CD4-positive, alpha-beta T cell (primary cell): ENCODE measurements at regions of chr18 and their contacts with region 1.

Region 1: GRCh38 chr18:51051105-51051712 is 21.2 kb downstream of the SMAD4 start:
- DNase-seq: peak in 4 of 14 experiments; percentile 15 to 79 (median 72)
- ATAC-seq: peak; percentile 83
- H3K4me3 ChIP-seq: no peak overlapping the region
- H3K4me3 Mint-ChIP-seq: no peak overlapping the region
- H3K27ac ChIP-seq: no peak overlapping the region
- H3K27ac Mint-ChIP-seq: peak overlapping the region; percentile 37
- H3K4me1 ChIP-seq: no peaks in the 10 kb centered on the region
- H3K4me1 Mint-ChIP-seq: peaks cover 46% of the 10 kb centered on the region
- H3K27me3 ChIP-seq: no peaks in the 10 kb centered on the region
- H3K27me3 Mint-ChIP-seq: no peaks in the 10 kb centered on the region
- CTCF ChIP-seq: peak; percentile 86

Region 2: DNA sequence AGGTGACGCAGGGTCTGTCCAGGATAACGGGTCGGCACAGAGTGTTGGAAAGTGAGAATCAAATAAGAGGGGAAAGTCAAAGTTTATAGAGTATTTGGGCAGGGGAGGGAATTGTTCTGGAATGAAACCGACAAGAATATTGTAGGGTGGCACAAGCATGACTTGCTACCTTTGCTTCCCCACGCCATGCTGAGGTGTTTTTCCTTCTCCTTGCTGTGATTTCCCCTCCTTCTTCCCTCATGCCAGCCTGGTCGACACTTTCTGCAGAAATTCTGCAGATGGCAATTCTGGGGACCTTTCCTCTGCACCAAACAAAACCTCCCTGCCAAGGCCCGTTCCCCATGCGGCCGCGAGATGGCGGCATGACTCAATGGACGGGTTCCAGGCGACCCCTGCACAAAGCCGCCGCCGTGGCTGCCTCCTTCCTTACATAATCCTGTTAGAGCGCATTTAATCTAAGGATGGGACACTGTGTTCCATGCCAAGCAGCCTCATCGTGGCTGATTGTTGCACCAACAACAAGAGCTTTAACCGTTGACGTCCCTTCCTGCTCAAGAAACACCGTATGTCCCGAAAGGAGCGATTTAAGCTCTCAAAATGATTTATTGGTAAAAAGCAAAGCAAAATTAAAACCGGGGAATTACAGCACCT is 231.4 kb before region 1 on chr18 and contains the start of gene MRO:
- CTCF ChIA-PET with region 1: interaction called, 12 read pairs
- POLR2A ChIA-PET with region 1: no interaction called
- intact Hi-C with region 1: loop called (anchors 1 kb)
- DNase-seq: peak; percentile 61 to 88 (median 74)
- ATAC-seq: peak; percentile 100
- H3K4me3 ChIP-seq: peak within 1 kb of the TSS; percentile 51
- H3K4me3 Mint-ChIP-seq: no peak within 1 kb of the TSS
- H3K27ac ChIP-seq: no peak within 1 kb of the TSS
- H3K27ac Mint-ChIP-seq: no peak within 1 kb of the TSS
- H3K4me1 ChIP-seq: peaks cover 14% of the 10 kb centered on the region
- H3K4me1 Mint-ChIP-seq: no peaks in the 10 kb centered on the region
- H3K27me3 ChIP-seq: peaks cover 7 to 11% of the 10 kb centered on the region in 2 experiments
- H3K27me3 Mint-ChIP-seq: peaks cover 26% of the 10 kb centered on the region
- CTCF ChIP-seq: peak; percentile 96
- total RNA-seq, gene MRO: not detected

Region 3: DNA sequence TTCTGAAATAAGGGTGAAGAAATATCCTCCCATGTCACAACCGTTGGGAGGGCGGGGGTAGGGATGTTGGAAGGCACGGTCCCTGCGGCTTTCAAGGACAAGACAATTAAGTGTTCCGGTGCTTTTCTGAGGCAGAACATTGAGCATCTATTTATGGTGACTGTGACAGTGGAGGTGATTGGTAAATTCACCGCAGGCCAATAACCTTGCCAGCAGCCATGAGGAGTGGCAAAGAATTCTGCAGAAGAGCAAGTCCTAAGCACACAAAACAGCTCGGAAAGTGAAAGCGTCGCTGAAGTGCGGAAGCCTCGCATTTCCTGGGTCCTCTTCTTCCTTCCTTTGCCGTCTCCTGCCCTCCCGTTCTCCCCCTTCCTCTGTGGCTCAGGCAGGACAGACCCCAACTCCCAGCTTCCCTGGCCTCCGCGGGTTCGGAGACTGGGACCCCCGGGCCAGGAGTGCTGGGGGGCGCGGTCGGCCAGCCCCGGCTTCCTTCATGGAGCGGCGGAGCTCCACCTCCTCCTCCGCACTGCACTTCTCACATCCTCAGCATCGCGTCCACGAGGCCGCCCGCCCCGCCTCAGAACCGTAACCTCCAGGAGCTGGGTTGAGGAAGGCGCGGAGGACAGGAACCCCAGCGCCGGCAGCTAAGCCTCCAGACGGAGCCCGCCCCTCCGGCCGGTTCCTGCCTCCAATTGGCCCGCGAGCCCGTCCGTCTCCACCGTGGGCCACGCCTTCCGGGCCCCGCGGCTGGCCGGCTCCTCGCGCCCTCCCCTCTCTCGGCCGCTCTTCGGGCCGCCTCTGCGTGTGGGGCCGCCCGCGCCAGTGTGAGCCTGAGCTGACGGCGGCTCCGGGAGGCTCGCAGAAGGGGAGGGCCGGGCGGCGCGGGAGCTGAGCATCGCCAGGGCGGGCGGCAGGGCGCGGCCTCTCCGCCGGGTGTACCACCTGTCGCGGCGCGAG is 172.6 kb before region 1 on chr18 and contains the start of gene ME2:
- CTCF ChIA-PET with region 1: interaction called, 3 read pairs
- POLR2A ChIA-PET with region 1: interaction called, 7 read pairs
- intact Hi-C with region 1: loop called in 1 of 2 experiments (anchors 5 kb)
- DNase-seq: peak; percentile 77 to 94 (median 88)
- ATAC-seq: peak; percentile 90
- H3K4me3 ChIP-seq: peak within 1 kb of the TSS; percentile 93
- H3K4me3 Mint-ChIP-seq: peak within 1 kb of the TSS; percentile 98
- H3K27ac ChIP-seq: peak within 1 kb of the TSS; percentile 95 to 97
- H3K27ac Mint-ChIP-seq: peak within 1 kb of the TSS; percentile 97
- H3K4me1 ChIP-seq: peaks cover 32% of the 10 kb centered on the region
- H3K4me1 Mint-ChIP-seq: peaks cover 28% of the 10 kb centered on the region
- H3K27me3 ChIP-seq: no peaks in the 10 kb centered on the region
- H3K27me3 Mint-ChIP-seq: peaks cover 6% of the 10 kb centered on the region
- CTCF ChIP-seq: no peak
- total RNA-seq, gene ME2: 15.6 to 16.1 TPM

Region 4: DNA sequence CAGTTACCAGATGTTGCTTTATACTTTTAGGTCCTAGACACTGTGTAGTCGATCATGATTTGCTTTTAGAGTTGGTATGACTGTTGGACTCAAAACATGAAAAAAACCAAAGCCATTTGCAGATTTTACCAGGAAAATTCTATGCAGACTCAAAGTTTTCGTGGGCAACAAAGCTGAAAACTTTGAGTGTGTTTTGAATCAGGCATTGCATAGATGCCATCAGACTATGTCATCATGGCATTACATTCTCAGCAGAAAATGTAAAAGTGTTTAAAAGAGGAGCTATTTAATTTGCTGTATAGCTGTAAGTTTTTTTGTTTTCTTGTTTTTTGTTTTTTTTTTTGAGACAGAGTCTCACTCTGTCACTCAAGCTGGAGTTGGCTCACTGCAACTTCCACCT is 126.8 kb before region 1 on chr18:
- CTCF ChIA-PET with region 1: no interaction called
- POLR2A ChIA-PET with region 1: no interaction called
- intact Hi-C with region 1: loop called in 1 of 2 experiments (anchors 5 kb)
- DNase-seq: no peak
- ATAC-seq: no peak
- H3K4me3 ChIP-seq: no peak overlapping the region
- H3K4me3 Mint-ChIP-seq: no peak overlapping the region
- H3K27ac ChIP-seq: no peak overlapping the region
- H3K27ac Mint-ChIP-seq: no peak overlapping the region
- H3K4me1 ChIP-seq: no peaks in the 10 kb centered on the region
- H3K4me1 Mint-ChIP-seq: peaks cover 4% of the 10 kb centered on the region
- H3K27me3 ChIP-seq: no peaks in the 10 kb centered on the region
- H3K27me3 Mint-ChIP-seq: no peaks in the 10 kb centered on the region
- CTCF ChIP-seq: no peak

Region 5: DNA sequence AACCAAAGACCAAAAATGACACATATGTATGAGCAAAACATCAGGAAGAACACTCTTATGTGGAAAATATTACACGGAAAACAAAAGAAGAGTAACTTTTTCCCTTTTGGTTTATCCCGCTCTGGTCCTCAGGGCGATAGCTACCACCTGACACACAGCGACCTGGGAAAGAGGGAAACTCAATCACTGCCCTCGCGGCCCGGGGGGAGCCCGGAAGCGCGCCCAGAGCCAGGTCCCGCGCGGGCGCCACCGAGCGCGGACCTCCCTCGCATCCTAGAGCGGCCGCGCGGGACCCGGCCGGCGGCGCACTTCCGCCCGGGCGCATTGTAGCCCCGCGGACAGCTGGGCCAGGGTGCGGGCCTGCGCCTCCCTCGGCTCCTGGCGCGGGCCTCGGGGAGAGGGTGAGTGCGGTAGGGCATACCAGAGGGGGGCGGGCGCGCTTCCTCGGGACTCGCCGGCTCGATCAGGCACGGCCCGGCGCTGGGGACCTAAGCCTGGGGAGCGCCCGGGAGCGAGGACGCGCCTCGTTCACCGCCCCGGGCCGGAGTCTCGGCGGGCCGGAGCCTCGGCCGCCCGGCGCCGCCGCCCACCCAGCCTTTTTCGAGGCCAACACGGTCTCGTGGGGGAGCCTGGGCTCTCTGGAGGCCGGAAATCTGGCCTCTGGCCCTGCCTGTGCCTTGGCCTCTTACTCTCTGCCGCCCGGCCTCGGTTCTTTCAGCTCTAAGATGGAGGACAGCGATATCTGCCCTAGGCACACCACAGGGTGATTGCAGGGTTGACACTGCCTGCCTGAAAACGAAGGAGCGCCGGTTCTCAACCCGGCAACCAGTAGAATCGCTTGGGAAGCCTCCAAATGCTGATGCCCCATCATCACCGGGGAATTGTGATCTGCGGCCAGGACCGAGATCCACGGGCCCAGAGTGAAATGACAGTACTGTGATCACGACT is 83.2 kb before region 1 on chr18 and contains the start of gene ELAC1:
- CTCF ChIA-PET with region 1: no interaction called
- POLR2A ChIA-PET with region 1: interaction called, 4 read pairs
- intact Hi-C with region 1: loop called in 1 of 2 experiments (anchors 5 kb)
- DNase-seq: peak; percentile 43 to 86 (median 59)
- ATAC-seq: peak; percentile 89
- H3K4me3 ChIP-seq: peak within 1 kb of the TSS; percentile 88
- H3K4me3 Mint-ChIP-seq: peak within 1 kb of the TSS; percentile 96
- H3K27ac ChIP-seq: peak within 1 kb of the TSS; percentile 78 to 85
- H3K27ac Mint-ChIP-seq: peak within 1 kb of the TSS; percentile 83
- H3K4me1 ChIP-seq: peaks cover 9% of the 10 kb centered on the region
- H3K4me1 Mint-ChIP-seq: peaks cover 37% of the 10 kb centered on the region
- H3K27me3 ChIP-seq: no peaks in the 10 kb centered on the region
- H3K27me3 Mint-ChIP-seq: no peaks in the 10 kb centered on the region
- CTCF ChIP-seq: no peak
- total RNA-seq, gene ELAC1: 3.0 to 4.6 TPM

Region 6: DNA sequence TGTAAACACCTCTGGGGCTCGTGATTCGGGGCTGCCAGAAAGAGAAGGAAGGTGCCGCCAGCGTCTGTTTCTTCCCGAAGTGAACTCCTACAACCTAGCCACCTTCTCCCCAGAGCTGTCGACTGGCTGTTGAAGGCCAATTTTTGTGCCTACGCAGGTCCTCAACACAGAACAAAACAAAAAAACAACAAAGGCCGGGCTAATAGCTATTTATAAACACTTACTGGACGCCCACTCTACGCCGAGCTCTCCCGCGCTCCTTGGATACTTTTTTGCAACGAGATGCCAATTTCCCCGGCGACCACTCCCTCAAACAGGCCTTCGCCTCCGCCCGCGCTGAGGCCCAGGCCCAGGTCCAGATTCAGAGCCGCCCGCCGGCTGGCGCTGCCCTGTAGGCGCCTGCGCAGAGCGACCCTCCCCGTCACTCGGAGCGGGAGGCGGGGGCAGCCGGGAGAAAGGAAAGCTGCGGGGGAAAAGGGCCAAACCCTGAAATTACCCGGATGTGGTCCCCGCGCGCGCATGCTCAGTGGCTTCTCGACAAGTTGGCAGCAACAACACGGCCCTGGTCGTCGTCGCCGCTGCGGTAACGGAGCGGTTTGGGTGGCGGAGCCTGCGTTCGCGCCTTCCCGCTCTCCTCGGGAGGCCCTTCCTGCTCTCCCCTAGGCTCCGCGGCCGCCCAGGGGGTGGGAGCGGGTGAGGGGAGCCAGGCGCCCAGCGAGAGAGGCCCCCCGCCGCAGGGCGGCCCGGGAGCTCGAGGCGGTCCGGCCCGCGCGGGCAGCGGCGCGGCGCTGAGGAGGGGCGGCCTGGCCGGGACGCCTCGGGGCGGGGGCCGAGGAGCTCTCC is 21.3 kb before region 1 on chr18 and contains the start of gene SMAD4:
- CTCF ChIA-PET with region 1: interaction called, 5 read pairs
- POLR2A ChIA-PET with region 1: interaction called, 14 read pairs
- intact Hi-C with region 1: loop called in 1 of 2 experiments (anchors 2 kb)
- DNase-seq: peak; percentile 97 to 99 (median 98)
- ATAC-seq: peak; percentile 78
- H3K4me3 ChIP-seq: peak within 1 kb of the TSS; percentile 77
- H3K4me3 Mint-ChIP-seq: peak within 1 kb of the TSS; percentile 100
- H3K27ac ChIP-seq: peak within 1 kb of the TSS; percentile 79 to 82
- H3K27ac Mint-ChIP-seq: peak within 1 kb of the TSS; percentile 100
- H3K4me1 ChIP-seq: peaks cover 35% of the 10 kb centered on the region
- H3K4me1 Mint-ChIP-seq: peaks cover 63% of the 10 kb centered on the region
- H3K27me3 ChIP-seq: no peaks in the 10 kb centered on the region
- H3K27me3 Mint-ChIP-seq: no peaks in the 10 kb centered on the region
- CTCF ChIP-seq: no peak
- total RNA-seq, gene SMAD4: 82.0 to 82.9 TPM

Region 7: GRCh38 chr18:51039138-51040112 is 11.8 kb before region 1 on chr18:
- CTCF ChIA-PET with region 1: interaction called, 12 read pairs
- POLR2A ChIA-PET with region 1: interaction called, 4 read pairs
- intact Hi-C with region 1: no loop called
- DNase-seq: peak in 4 of 14 experiments; percentile 11 to 30 (median 25)
- ATAC-seq: peak; percentile 69
- H3K4me3 ChIP-seq: no peak overlapping the region
- H3K4me3 Mint-ChIP-seq: peak overlapping the region; percentile 64
- H3K27ac ChIP-seq: peak overlapping the region in 1 of 2 donors; percentile 5
- H3K27ac Mint-ChIP-seq: peak overlapping the region; percentile 72
- H3K4me1 ChIP-seq: peaks cover 59% of the 10 kb centered on the region
- H3K4me1 Mint-ChIP-seq: peaks cover 98% of the 10 kb centered on the region
- H3K27me3 ChIP-seq: no peaks in the 10 kb centered on the region
- H3K27me3 Mint-ChIP-seq: no peaks in the 10 kb centered on the region
- CTCF ChIP-seq: no peak